ENCODE measurements at regions of chr17 and their contacts with region 1.

Region 1: DNA sequence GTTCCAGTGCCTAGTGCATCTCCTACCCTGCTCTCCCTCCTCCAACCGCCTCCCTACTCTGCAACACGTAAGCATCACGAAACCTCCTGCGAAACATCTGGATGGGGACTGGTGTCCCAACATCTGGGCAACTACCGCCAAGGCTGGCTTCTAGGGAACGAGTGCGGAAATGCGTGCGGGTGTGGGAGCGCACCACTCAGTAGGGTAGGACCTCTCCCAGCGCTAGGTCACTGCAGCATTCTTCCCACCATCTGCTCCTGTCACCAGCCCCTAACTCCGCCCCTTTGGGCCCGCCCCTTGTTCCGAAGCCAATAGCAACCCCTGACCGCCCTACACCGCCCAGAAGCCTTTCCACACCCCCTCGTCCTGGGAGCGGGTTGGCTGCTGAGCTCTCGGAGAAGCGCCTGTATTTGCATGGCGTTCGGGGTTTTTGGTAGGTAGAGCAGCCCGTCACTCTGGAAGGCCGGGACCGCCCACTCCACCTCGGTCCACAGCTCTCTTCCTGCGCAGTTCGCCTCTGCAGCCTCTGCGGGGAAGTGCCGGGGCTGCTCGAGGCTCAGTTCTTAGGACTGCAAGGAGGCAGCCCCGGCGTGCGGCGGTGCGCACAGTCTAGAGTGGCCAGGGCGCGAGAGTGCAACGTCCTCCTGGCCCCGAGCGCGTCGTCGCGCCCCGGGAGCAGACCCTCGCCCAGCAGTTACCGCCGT is at the start of gene HS3ST3B1:
- DNase-seq: peak; percentile 100
- H3K4me3 ChIP-seq: peak within 1 kb of the TSS; percentile 94
- H3K27ac ChIP-seq: peak within 1 kb of the TSS; percentile 81
- H3K27me3 ChIP-seq: no peaks in the 10 kb centered on the region
- CTCF ChIP-seq: no peak; the same call in 1 of the 2 replicates
- polyA plus RNA-seq, gene HS3ST3B1: 9.6 and 10.3 TPM in 2 replicates

Region 2: GRCh38 chr17:13594762-13595598 is 705.7 kb before region 1 on chr17:
- CTCF ChIA-PET with region 1: interaction called, 57 read pairs
- POLR2A ChIA-PET with region 1: interaction called, 15 read pairs
- DNase-seq: peak; percentile 82
- H3K4me3 ChIP-seq: peak overlapping the region; percentile 17; the same call in 1 of the 2 replicates
- H3K27ac ChIP-seq: peak overlapping the region; percentile 25
- H3K27me3 ChIP-seq: no peaks in the 10 kb centered on the region
- CTCF ChIP-seq: peak; percentile 90

Region 3: GRCh38 chr17:13601776-13602551 is 698.8 kb before region 1 on chr17 and contains the start of gene HS3ST3A1:
- CTCF ChIA-PET with region 1: interaction called, 57 read pairs
- POLR2A ChIA-PET with region 1: interaction called, 15 read pairs
- DNase-seq: peak; percentile 65
- H3K4me3 ChIP-seq: peak within 1 kb of the TSS; percentile 87
- H3K27ac ChIP-seq: peak within 1 kb of the TSS; percentile 86
- H3K27me3 ChIP-seq: no peaks in the 10 kb centered on the region
- CTCF ChIP-seq: no peak
- polyA plus RNA-seq, gene HS3ST3A1: 6.6 and 11.9 TPM in 2 replicates

Region 4: GRCh38 chr17:14080847-14081251 is 219.9 kb before region 1 on chr17:
- CTCF ChIA-PET with region 1: interaction called, 10 read pairs
- POLR2A ChIA-PET with region 1: interaction called, 3 read pairs
- DNase-seq: no peak
- H3K4me3 ChIP-seq: no peak overlapping the region
- H3K27ac ChIP-seq: no peak overlapping the region
- H3K27me3 ChIP-seq: no peaks in the 10 kb centered on the region
- CTCF ChIP-seq: no peak

Region 5: DNA sequence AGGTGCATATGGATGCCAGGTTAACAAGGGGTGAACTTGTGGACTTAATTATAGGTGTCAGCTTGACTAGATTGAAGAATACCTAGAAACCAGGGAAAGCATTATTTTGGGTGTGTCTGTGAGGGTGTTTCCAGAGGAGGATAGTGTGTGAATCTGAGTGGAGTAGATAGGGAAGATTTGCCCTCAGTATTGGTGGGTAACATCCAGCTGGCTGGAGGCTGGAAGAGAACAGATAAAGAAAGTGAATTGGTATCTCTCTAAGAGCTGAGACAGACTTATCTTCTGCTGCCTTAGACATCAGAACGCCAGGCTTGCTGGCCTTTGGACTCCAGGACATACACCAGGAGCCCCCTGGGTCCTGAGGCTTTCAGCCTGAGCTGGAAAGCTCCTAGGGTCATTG is 139.3 kb before region 1 on chr17:
- CTCF ChIA-PET with region 1: no interaction called
- POLR2A ChIA-PET with region 1: no interaction called
- DNase-seq: no peak
- H3K4me3 ChIP-seq: no peak overlapping the region
- H3K27ac ChIP-seq: no peak overlapping the region
- H3K27me3 ChIP-seq: no peaks in the 10 kb centered on the region
- CTCF ChIP-seq: no peak

Region 6: GRCh38 chr17:14351493-14351892 is 50.8 kb after region 1 on chr17:
- CTCF ChIA-PET with region 1: no interaction called
- POLR2A ChIA-PET with region 1: no interaction called
- DNase-seq: no peak
- H3K4me3 ChIP-seq: no peak overlapping the region
- H3K27ac ChIP-seq: no peak overlapping the region
- H3K27me3 ChIP-seq: no peaks in the 10 kb centered on the region
- CTCF ChIP-seq: no peak